Esophagus muscularis mucosa (tissue), 4 donors: ENCODE measurements at regions of chr7 and their contacts with region 1.

Region 1: DNA sequence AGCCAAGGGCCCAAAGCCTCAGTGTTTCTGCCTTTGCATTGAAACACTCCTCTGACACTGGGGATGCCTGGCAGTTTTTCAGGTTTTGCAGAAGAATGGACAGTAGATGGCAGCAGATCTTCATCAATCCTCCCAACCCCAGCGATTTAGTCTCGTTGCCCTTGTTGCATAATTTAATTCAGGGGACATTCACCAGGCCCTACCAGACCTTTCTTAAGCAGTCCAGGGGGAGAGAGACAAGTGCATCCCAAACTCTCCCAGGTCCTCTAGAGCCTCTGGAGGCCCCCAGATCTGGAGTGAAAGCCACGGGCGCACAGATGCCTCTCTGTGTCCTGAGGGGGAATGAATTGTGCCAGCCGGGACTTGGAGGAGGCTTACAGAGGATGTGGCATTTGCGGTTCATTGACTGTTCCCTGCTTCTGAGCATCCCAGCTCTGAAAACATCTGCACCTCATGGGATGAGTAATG is 29.6 kb downstream of the MINDY4 start:
- DNase-seq: peak; percentile 95
- H3K4me3 ChIP-seq: no peak overlapping the region
- H3K27ac ChIP-seq: peak overlapping the region; percentile 49 to 82 (median 65)
- H3K4me1 ChIP-seq: peaks cover 41 to 95% (median 89%) of the 10 kb centered on the region in 4 donors
- H3K27me3 ChIP-seq: no peaks in the 10 kb centered on the region
- CTCF ChIP-seq: peak; percentile 76 to 80 (median 77)
- EP300 ChIP-seq: no peak
- POLR2A ChIP-seq: no peak

Region 2: DNA sequence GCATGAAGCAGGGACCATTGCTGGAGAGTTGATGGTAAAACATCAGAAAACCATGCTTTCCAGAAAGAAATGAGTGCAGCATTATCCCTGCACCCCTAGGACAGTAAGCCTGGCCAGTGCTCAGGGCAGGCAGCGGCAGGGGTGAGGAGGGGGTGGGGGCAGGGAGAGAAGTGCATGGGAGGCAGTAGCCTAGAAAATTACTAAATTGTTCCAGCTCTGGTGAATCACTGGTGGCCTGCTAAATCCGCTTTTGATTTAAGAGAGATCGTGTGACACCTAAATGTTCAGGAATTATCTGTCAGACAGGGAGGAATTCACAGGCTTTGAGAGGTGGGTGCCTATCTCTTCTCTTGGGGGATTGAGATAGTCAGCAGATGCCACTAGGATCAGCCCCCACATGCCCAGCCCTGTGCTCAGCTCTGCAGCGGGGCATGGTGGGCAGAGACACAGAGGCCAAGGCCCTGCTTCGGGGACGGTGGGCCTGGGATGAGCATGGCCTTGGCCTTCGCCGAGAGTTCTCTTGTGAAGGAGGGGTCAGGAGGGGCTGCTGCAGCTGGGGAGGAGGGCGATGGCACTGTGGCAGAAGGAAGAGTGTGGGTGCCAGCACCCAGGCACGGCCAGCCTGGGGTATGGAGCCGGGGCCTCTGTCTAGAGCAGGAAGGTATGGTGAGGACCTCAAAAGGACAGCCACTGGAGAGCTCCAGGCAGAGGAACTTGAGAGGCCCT is 105.9 kb after region 1 on chr7:
- intact Hi-C with region 1: loop called (anchors 2 kb)
- DNase-seq: no peak
- H3K4me3 ChIP-seq: no peak overlapping the region
- H3K27ac ChIP-seq: peak overlapping the region; percentile 72 to 90 (median 86)
- H3K4me1 ChIP-seq: peaks cover 70 to 93% (median 84%) of the 10 kb centered on the region in 4 donors
- H3K27me3 ChIP-seq: no peaks in the 10 kb centered on the region
- CTCF ChIP-seq: no peak
- EP300 ChIP-seq: no peak
- POLR2A ChIP-seq: no peak

Region 3: GRCh38 chr7:30925913-30926312 is 125.1 kb after region 1 on chr7:
- intact Hi-C with region 1: loop called (anchors 5 kb)
- DNase-seq: no peak
- H3K4me3 ChIP-seq: no peak overlapping the region
- H3K27ac ChIP-seq: no peak overlapping the region
- H3K4me1 ChIP-seq: peaks cover 14 to 25% (median 23%) of the 10 kb centered on the region in 4 donors
- H3K27me3 ChIP-seq: no peaks in the 10 kb centered on the region
- CTCF ChIP-seq: no peak
- EP300 ChIP-seq: no peak
- POLR2A ChIP-seq: no peak

Region 4: DNA sequence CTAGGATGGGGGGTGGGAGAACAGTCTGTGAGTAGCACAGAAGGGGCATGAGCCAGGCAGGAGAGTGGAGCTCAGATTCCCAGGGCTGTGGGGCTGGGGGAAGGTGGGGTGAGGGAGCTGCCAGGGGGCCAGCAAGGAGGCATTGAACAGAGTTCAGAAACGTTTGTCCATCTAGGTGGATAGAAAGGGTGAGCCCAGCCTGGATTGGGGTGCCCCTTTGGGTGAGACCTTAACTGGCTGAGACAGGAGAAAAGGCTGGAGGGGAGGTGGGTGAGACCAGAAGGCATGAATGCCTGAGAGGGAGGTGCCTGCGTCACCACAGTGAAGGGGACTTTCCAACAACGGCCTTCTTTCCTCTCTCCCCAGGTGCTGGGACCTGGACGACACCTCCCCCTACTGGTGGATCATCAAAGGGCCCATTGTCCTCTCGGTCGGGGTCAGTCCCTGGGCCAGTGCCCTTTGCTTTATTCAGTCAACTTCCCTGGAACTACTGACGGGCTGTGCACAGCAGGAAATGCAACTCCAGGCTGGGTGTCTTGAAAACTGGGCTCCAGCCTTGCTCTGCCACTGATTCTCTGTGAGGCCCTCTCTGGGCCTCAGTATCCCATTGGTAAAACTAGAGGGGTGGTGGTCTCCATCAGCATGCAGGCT is 173.9 kb after region 1 on chr7:
- intact Hi-C with region 1: loop called (anchors 2 kb)
- DNase-seq: no peak
- H3K4me3 ChIP-seq: no peak overlapping the region
- H3K27ac ChIP-seq: no peak overlapping the region
- H3K4me1 ChIP-seq: peaks cover 0 to 14% (median 10%) of the 10 kb centered on the region in 4 donors
- H3K27me3 ChIP-seq: peaks cover 0 to 12% (median 0%) of the 10 kb centered on the region in 4 donors
- CTCF ChIP-seq: peak; percentile 64 to 80 (median 68)
- EP300 ChIP-seq: no peak
- POLR2A ChIP-seq: no peak

Region 5: DNA sequence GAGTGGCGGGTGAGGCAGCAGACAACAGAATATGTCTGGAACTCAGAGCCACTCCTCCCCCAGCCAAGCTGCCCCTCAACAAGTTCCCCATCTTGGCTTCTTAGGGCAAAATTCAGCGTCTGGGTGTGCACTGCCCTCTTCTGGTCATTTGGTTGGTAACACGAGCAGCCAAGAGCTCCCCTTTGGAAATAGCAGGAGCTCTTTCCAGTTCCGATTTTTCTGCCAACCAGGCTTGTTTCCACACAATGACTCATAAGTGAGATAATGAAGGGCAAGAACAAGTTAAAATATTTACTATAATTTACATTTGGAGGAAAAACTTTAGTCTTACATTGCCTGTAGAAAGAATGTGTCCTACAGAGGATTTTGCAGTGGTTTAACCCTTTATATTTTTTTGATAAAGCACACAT is 321.8 kb after region 1 on chr7:
- intact Hi-C with region 1: loop called (anchors 2 kb)
- DNase-seq: peak; percentile 93
- H3K4me3 ChIP-seq: no peak overlapping the region
- H3K27ac ChIP-seq: peak overlapping the region in 1 of 4 donors; percentile 26
- H3K4me1 ChIP-seq: peaks cover 0 to 14% (median 12%) of the 10 kb centered on the region in 4 donors
- H3K27me3 ChIP-seq: no peaks in the 10 kb centered on the region
- CTCF ChIP-seq: peak; percentile 76 to 83 (median 82)
- EP300 ChIP-seq: no peak
- POLR2A ChIP-seq: no peak